Endothelial cell of umbilical vein (primary cell): ENCODE measurements at regions of chr3 and their contacts with region 1.

Region 1: DNA sequence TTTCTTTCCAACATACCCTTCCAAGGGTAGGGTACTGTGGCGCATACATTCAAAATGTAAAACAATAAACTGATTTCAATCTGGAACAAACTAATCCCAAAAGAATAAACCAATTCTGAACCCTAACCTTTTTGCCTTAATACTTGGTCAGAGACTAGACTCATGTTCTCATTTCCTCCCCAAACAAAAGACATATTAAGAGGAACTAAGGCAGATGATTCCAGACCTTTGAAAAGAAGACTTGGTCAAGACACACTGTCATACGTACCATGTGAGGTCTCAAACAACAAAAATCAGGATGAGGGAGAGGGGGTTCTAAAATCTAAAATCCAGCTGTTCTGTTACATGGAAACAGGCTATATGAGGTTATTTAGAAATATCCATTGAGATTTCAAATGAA is 102.1 kb downstream of the RFTN1 start:
- DNase-seq: no peak
- H3K4me3 ChIP-seq: no peak overlapping the region
- H3K27ac ChIP-seq: no peak overlapping the region
- H3K4me1 ChIP-seq: no peaks in the 10 kb centered on the region
- H3K27me3 ChIP-seq: no peaks in the 10 kb centered on the region
- CTCF ChIP-seq: no peak
- POLR2A ChIP-seq: no peak

Region 2: DNA sequence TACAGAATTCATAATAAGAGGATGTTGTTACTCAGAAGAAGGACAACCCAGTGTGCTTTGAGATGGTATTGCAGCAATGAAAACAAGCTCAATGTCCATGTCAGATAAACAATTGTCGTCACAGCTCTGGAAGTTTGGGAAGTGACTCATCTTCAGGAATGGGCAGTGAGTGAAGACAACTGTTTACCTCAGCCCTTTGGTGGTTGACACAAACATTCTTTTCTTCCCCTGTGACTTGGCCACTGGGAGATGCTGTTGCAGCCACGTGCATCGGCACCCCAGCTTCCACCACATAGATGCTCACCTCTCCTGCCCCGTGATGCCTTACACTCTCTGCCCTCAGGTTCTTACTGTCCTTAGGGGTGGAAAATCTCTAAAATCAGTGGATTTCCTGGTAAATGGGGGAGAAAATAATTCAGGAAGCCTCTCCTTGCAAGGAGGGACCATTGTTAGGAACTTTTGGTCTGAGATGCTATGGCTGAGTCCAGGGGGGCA is 351.0 kb before region 1 on chr3:
- CTCF ChIA-PET with region 1: no interaction called
- POLR2A ChIA-PET with region 1: no interaction called
- dilution Hi-C with region 1: no loop called
- intact Hi-C with region 1: no loop called
- DNase-seq: peak; percentile 82
- H3K4me3 ChIP-seq: no peak overlapping the region
- H3K27ac ChIP-seq: peak overlapping the region; percentile 97
- H3K4me1 ChIP-seq: peaks cover 57% of the 10 kb centered on the region
- H3K27me3 ChIP-seq: no peaks in the 10 kb centered on the region
- CTCF ChIP-seq: peak; percentile 4 to 45
- POLR2A ChIP-seq: peak; percentile 35

Region 3: DNA sequence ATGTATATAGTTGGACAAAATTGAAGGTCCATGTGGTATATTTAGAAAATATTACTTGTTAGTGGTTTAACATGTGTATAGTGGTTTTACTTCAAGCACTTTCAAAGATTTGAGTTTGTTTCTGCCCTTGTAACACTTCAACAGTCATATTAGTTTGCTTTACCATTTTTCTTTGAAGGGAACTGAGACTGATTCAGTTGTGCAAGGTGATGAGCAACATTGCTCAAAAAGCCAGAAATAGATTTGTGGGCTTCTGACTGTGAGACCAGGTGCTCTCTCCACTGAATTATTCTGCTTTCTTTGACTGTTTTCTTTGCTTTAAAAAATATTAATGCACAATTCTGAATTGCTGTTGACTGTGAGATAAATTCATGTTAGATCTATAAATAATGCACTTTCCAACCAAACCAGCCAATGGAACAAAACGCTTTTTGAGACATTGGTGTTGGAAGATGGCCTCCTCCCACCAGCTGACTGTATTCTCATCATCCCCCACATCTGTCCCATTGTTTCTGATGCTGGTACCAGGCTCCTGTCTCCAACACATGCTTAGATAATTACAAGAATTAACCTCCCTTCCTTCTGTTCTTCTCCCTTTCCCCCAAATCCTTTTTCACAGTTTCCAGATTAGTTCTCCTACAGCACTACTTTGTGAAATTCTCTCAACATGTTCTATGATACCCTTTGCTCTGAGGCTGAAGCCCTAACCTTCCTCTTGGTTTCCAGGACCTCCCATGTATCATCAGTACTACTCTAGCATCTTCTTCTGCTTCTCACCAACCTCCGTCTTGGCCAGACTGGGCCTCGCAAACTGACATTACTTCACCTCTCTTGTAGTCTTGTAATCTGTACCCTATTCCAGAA is 501.2 kb after region 1 on chr3:
- CTCF ChIA-PET with region 1: no interaction called
- POLR2A ChIA-PET with region 1: no interaction called
- dilution Hi-C with region 1: no loop called
- intact Hi-C with region 1: no loop called
- DNase-seq: no peak
- H3K4me3 ChIP-seq: no peak overlapping the region
- H3K27ac ChIP-seq: no peak overlapping the region
- H3K4me1 ChIP-seq: peaks cover 37% of the 10 kb centered on the region
- H3K27me3 ChIP-seq: no peaks in the 10 kb centered on the region
- CTCF ChIP-seq: no peak
- POLR2A ChIP-seq: no peak

Region 4: GRCh38 chr3:17302774-17303173 is 891.3 kb after region 1 on chr3:
- CTCF ChIA-PET with region 1: no interaction called
- POLR2A ChIA-PET with region 1: interaction called, 10 read pairs
- dilution Hi-C with region 1: no loop called
- intact Hi-C with region 1: no loop called
- DNase-seq: peak; percentile 43
- H3K4me3 ChIP-seq: no peak overlapping the region
- H3K27ac ChIP-seq: no peak overlapping the region
- H3K4me1 ChIP-seq: peaks cover 2% of the 10 kb centered on the region
- H3K27me3 ChIP-seq: no peaks in the 10 kb centered on the region
- CTCF ChIP-seq: no peak
- POLR2A ChIP-seq: no peak